Caco-2 (cell line): ENCODE measurements at regions of chr15 and their contacts with region 1.

Region 1: DNA sequence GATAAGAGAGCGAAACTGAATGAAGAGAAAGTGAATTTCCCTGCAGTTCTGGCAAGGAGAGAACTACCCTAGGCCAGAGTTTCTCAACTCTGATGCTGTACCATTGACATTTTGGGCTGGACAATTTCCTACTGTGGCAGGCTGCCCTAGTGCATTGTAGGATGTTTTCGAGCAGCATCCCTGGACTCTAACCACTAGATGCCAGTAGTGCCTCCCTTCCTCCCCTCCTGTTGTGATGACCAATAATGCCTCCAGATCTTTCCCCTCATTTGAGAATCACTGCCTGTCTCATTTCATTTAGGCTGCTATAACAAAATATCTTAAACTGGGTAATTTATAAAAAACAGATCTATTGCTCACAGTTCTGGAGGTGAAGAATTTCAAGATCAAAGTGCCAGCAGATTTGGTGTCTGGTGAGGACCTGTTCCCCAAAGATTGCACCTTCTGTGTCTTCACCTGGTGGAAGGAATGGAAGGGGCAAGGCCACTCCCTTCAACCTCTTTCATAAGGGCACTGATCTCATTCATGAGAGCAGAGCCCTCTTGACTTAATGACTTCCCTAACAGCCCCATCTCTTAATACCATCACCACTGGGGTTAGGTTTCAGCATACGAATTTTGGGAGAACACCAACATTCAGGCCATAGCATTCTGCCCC is 188.9 kb upstream of the MEIS2 start:
- DNase-seq: peak; percentile 26 to 41
- H3K4me3 ChIP-seq: no peak overlapping the region
- H3K4me3 Mint-ChIP-seq: no peak overlapping the region
- H3K27ac Mint-ChIP-seq: no peak overlapping the region
- H3K4me1 ChIP-seq: no peaks in the 10 kb centered on the region
- H3K4me1 Mint-ChIP-seq: no peaks in the 10 kb centered on the region
- H3K27me3 ChIP-seq: no peaks in the 10 kb centered on the region
- H3K27me3 Mint-ChIP-seq: peaks cover 7% of the 10 kb centered on the region
- CTCF ChIP-seq: peak in 1 of 2 experiments; percentile 48

Region 2: GRCh38 chr15:37891766-37892368 is 602.6 kb after region 1 on chr15:
- CTCF ChIA-PET with region 1: no interaction called
- POLR2A ChIA-PET with region 1: no interaction called
- intact Hi-C with region 1: loop called (anchors 1 kb)
- DNase-seq: peak in 1 of 2 experiments; percentile 20
- H3K4me3 ChIP-seq: no peak overlapping the region
- H3K4me3 Mint-ChIP-seq: no peak overlapping the region
- H3K27ac Mint-ChIP-seq: no peak overlapping the region
- H3K4me1 ChIP-seq: no peaks in the 10 kb centered on the region
- H3K4me1 Mint-ChIP-seq: no peaks in the 10 kb centered on the region
- H3K27me3 ChIP-seq: no peaks in the 10 kb centered on the region
- H3K27me3 Mint-ChIP-seq: peaks cover 14% of the 10 kb centered on the region
- CTCF ChIP-seq: peak; percentile 69 to 74